Activated CD4-positive, alpha-beta memory T cell treated with anti-CD3 and anti-CD28 coated beads for 36 hours (primary cell): ENCODE measurements at regions of chr19 and their contacts with region 1.

Region 1: GRCh38 chr19:58519355-58520256 is at the start of gene ZBTB45:
- DNase-seq: peak; percentile 95
- H3K4me3 Mint-ChIP-seq: peak within 1 kb of the TSS; percentile 88
- H3K27ac Mint-ChIP-seq: peak within 1 kb of the TSS; percentile 88
- H3K4me1 Mint-ChIP-seq: peaks cover 32% of the 10 kb centered on the region
- H3K27me3 Mint-ChIP-seq: no peaks in the 10 kb centered on the region
- total RNA-seq, gene ZBTB45: 9.9 to 10.0 TPM

Region 2: DNA sequence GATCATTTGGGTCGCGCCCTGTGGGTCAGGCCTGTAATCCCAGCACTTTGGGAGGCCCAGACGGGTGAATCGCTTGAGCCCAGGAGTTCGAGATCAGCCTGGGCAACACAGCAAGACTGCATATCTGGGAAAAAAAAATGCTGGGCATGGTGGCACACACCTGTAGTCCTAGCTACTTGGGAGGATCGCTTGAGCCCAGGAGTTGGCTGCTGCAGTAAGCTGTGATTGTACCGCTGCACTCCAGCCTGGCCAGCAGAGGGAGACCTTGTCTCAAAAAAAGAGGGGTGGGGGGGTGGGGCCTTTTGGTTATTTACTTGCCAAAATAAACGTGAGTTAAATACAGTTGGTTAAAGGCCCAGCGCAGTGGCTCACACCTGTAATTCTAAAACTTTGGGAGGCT is 300.7 kb before region 1 on chr19:
- CTCF ChIA-PET with region 1: interaction called, 3 read pairs
- POLR2A ChIA-PET with region 1: no interaction called
- intact Hi-C with region 1: loop called (anchors 1 kb)
- DNase-seq: peak; percentile 63
- H3K4me3 Mint-ChIP-seq: no peak overlapping the region
- H3K27ac Mint-ChIP-seq: no peak overlapping the region
- H3K4me1 Mint-ChIP-seq: no peaks in the 10 kb centered on the region
- H3K27me3 Mint-ChIP-seq: no peaks in the 10 kb centered on the region

Region 3: DNA sequence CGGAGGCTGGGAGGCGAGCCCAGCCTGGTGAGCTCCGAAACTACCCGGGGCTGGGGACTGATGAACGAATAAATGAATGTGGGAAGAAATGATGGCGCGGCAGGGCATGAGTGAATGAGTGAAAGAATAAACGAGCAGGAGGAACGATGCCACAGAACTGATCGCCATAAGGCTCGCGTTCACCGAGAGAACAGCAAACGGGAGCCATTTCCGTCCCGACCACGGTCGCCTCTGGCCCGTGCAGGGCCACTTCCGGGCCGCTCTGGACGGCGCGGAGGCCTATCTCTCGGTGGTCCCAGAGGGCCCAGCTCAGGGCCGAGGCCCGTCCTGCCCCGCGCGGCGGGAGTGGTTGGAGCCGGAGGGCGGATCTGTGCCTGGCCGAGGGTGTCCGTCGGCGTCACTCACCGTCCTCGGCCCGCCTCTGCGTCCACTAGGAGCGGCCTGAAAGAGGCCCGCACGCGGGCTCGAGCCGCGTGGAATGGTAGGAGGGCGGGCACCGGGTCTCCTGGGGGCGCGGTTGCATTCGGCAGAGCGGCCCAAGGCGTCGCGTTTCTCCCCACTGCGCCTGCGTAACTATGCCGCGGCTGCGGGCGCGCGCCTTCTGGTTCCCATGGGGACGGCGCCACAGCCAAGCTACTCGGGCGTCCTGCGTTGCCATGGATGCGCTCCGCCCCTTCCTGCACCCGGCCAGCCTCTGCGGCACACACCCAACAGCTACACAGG is 157.2 kb before region 1 on chr19 and contains the start of gene ZNF497:
- CTCF ChIA-PET with region 1: interaction called, 12 read pairs
- POLR2A ChIA-PET with region 1: interaction called, 4 read pairs
- intact Hi-C with region 1: no loop called
- DNase-seq: peak; percentile 98
- H3K4me3 Mint-ChIP-seq: peak within 1 kb of the TSS; percentile 94
- H3K27ac Mint-ChIP-seq: peak within 1 kb of the TSS; percentile 89
- H3K4me1 Mint-ChIP-seq: peaks cover 8% of the 10 kb centered on the region
- H3K27me3 Mint-ChIP-seq: no peaks in the 10 kb centered on the region
- total RNA-seq, gene ZNF497: 0.31 to 0.93 TPM

Region 4: GRCh38 chr19:58439576-58440554 is 79.7 kb before region 1 on chr19 and contains the start of gene ZNF132:
- CTCF ChIA-PET with region 1: no interaction called
- POLR2A ChIA-PET with region 1: no interaction called
- intact Hi-C with region 1: no loop called
- DNase-seq: peak; percentile 97
- H3K4me3 Mint-ChIP-seq: peak within 1 kb of the TSS; percentile 84
- H3K27ac Mint-ChIP-seq: peak within 1 kb of the TSS; percentile 71
- H3K4me1 Mint-ChIP-seq: peaks cover 25% of the 10 kb centered on the region
- H3K27me3 Mint-ChIP-seq: no peaks in the 10 kb centered on the region
- total RNA-seq, gene ZNF132: 3.1 to 3.6 TPM

Region 5: DNA sequence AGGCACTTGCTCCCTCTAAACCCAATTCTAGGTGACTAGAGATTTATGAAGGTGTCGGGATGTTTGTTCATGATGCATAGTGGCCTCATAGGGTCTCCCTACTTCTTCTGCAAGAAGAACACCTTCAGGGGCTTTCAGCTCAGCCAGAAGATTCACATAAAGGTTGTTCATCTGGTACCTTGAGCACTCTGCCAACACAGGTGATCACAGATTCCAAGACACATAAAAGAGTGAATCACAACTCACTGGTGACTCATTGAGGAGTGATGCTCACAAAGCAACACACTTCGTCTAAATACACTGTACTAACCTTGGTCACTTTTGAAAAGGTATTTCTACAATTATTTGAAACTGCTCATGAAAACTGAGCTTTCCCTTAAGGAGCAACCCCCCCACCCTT is 59.6 kb before region 1 on chr19:
- CTCF ChIA-PET with region 1: no interaction called
- POLR2A ChIA-PET with region 1: no interaction called
- intact Hi-C with region 1: no loop called
- DNase-seq: no peak
- H3K4me3 Mint-ChIP-seq: no peak overlapping the region
- H3K27ac Mint-ChIP-seq: no peak overlapping the region
- H3K4me1 Mint-ChIP-seq: no peaks in the 10 kb centered on the region
- H3K27me3 Mint-ChIP-seq: no peaks in the 10 kb centered on the region

Region 6: DNA sequence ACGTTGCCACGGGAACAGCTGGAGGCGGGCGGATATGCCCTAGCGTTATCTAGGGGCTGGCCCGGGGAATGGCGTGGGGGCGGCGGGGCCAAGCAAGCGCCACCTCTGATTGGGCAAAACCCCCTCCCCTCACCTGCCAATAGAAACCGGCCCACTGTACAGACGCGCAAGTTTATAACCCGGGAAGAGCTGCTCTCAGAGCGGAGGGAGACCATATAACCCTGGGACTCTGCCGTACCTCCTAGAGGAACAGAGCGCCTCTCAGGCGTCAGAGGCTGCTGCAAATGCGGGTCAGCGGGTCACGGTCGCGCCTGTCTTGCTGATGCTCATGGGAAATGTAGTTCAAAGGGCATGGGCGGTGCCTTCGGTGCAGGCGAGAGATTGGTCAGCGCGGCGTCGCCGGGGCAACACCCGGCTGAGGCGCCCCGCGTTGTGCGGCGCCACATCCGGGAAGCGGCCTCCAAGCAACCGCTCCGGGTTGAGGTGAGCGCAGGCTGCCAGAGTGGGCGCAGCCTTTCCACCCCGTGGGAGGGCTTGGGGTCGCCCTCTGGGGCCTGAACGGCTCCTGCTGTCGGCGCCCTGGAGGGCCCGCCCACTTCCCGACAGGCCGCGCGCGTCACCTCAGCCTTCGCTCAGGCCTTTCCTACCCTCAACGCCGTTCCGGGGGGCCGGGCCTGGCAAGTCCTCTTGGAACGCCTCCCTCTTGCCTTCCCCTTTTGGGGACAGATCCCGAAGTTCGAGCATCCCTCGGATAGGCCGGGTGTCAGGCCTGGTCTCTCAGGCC is 43.7 kb before region 1 on chr19 and contains the start of gene ZNF446:
- CTCF ChIA-PET with region 1: interaction called, 12 read pairs
- POLR2A ChIA-PET with region 1: interaction called, 5 read pairs
- intact Hi-C with region 1: loop called (anchors 2 kb)
- DNase-seq: peak; percentile 98
- H3K4me3 Mint-ChIP-seq: peak within 1 kb of the TSS; percentile 93
- H3K27ac Mint-ChIP-seq: peak within 1 kb of the TSS; percentile 99
- H3K4me1 Mint-ChIP-seq: peaks cover 16% of the 10 kb centered on the region
- H3K27me3 Mint-ChIP-seq: no peaks in the 10 kb centered on the region
- total RNA-seq, gene ZNF446: 6.4 to 7.5 TPM

Region 7: DNA sequence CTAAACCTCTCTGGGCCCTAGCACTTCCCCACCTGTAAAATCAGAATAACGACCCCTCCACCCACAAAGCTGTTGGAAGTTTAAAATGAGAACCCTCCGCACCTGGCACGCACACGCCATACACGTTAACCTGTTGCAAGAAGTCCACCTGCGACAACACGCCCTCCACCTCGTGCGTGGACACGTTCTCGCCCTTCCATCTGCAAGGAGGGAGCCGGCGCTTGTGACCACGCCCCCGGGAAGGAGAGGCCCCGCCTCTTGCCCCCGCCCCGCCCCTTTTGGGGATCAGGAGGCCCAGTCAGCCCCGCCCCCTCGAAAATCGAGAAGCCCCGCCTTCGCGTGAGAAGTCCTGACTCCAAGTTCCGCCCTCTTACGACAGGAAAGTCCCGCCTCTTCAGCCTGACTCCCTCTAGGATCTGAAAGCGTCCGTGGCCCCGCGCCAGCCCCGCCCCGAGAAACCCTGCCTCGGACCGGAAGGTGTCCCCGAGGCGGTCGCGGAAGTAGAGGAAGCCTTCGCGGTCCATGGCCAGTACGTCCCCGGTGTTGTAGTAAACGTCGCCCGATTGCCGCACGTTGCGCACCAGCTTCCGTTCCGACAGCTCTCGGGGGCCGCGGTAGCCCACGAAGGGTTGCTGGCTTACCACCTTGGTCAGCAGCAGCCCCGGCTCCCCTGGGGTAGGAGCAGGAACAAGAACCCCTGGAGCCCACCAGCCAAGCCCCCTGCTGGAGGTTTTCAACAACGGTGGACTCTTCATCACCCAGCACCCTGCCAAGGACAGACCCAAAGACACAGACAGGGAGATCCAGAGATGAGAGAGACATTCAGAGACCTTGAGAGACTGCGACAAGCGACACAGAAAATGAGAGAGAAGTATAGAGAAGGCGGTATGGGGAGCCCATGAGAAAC is 20.3 kb before region 1 on chr19:
- CTCF ChIA-PET with region 1: interaction called, 21 read pairs
- POLR2A ChIA-PET with region 1: interaction called, 4 read pairs
- intact Hi-C with region 1: loop called (anchors 1 kb)
- DNase-seq: peak; percentile 100
- H3K4me3 Mint-ChIP-seq: peak overlapping the region; percentile 89
- H3K27ac Mint-ChIP-seq: peak overlapping the region; percentile 80
- H3K4me1 Mint-ChIP-seq: peaks cover 27% of the 10 kb centered on the region
- H3K27me3 Mint-ChIP-seq: no peaks in the 10 kb centered on the region

Region 8: GRCh38 chr19:58558623-58559274 is 39.1 kb after region 1 on chr19:
- CTCF ChIA-PET with region 1: interaction called, 39 read pairs
- POLR2A ChIA-PET with region 1: interaction called, 8 read pairs
- intact Hi-C with region 1: loop called (anchors 1 kb)
- DNase-seq: peak; percentile 100
- H3K4me3 Mint-ChIP-seq: peak overlapping the region; percentile 99
- H3K27ac Mint-ChIP-seq: peak overlapping the region; percentile 100
- H3K4me1 Mint-ChIP-seq: peaks cover 58% of the 10 kb centered on the region
- H3K27me3 Mint-ChIP-seq: no peaks in the 10 kb centered on the region

Region 9: GRCh38 chr19:58581227-58582151 is 61.9 kb after region 1 on chr19:
- CTCF ChIA-PET with region 1: interaction called, 65 read pairs
- POLR2A ChIA-PET with region 1: interaction called, 16 read pairs
- intact Hi-C with region 1: loop called (anchors 1 kb)
- DNase-seq: peak; percentile 96
- H3K4me3 Mint-ChIP-seq: no peak overlapping the region
- H3K27ac Mint-ChIP-seq: peak overlapping the region; percentile 78
- H3K4me1 Mint-ChIP-seq: peaks cover 36% of the 10 kb centered on the region
- H3K27me3 Mint-ChIP-seq: no peaks in the 10 kb centered on the region